Dorsolateral prefrontal cortex (tissue), 120 donors: ENCODE measurements at regions of chr3 and their contacts with region 1.

Region 1: DNA sequence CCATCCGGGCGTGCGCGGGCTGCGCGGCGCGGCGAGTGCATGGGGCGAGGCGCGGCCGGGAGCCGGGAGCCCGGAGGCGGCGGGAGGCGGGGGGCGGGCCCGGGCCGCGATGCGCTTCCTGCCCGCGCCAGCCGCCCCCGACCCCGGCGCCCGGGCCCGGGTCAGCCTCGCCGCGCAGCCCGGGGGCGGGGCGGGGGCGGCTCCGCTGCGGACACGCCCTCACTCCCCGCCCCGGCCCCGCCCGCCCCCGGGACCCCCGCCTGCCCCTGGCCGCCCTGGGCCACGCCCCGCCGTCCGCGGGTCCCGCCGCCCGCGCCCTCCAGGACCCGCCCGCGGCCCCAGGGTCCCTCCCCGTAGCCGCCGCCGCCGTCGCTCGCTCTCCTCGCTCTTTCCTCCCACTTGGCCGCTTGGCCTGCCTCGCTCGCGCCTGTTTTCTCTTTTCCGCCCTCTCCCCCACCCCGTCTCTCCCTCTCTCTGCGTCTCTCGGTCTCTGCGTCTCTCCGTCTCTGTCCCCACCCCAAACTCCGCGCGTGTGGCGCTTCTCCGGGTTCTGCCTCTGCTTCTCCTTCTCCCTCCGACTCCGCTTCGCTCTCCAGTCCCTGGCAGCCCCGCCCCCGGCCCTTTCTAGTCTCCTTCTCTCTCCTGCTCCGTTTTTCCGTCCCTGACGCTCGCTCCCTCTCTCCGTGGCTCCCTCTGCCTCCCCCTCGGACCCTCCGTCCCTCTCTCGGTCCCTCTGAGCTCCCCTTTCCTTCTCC is at the start of gene PLXND1:
- DNase-seq: peak in 4 of 10 donors; percentile 50 to 74 (median 62)
- H3K4me3 ChIP-seq: peak within 1 kb of the TSS; percentile 52 to 85 (median 75)
- H3K27ac ChIP-seq: peak within 1 kb of the TSS; percentile 58 to 98 (median 91)
- H3K27me3 ChIP-seq: no peaks in the 10 kb centered on the region
- CTCF ChIP-seq: no peak
- total RNA-seq, gene PLXND1: 60.7 to 184 (median 106) TPM

Region 2: DNA sequence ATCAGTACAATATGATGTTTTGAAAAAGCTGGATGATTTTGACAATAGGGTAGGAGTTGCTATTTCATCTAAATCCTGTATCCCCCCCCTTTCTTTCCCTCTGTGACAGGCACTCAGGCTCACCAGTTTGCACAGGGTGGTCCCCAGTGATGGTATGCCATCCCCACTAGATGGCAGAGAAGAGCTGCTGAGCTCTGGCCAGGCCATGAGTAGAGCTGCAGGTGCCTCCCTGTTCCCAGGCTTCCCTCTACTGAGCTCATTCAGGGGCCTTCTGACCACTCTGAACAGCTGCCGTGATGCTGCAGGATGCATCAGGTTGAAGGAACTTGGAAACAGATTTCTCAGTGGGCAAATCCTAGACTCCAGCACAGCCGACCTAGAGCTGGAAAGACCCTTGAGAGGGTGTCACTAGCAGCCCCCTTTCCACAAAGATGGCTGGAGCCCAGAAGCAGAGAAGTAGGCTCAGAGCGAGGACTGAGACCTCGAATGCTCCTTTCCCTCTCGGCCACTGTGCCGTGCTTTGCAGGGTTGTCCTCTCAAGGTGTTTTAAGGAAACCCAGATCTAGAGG is 223.4 kb before region 1 on chr3:
- intact Hi-C with region 1: loop called in 1 of 2 experiments (anchors 10 kb)
- DNase-seq: peak; percentile 26 to 78 (median 68)
- H3K4me3 ChIP-seq: no peak overlapping the region
- H3K27ac ChIP-seq: peak overlapping the region in 52 of 59 donors; percentile 0 to 91 (median 59)
- H3K27me3 ChIP-seq: no peaks in the 10 kb centered on the region
- CTCF ChIP-seq: peak in 55 of 56 donors; percentile 35 to 83 (median 74)

Region 3: DNA sequence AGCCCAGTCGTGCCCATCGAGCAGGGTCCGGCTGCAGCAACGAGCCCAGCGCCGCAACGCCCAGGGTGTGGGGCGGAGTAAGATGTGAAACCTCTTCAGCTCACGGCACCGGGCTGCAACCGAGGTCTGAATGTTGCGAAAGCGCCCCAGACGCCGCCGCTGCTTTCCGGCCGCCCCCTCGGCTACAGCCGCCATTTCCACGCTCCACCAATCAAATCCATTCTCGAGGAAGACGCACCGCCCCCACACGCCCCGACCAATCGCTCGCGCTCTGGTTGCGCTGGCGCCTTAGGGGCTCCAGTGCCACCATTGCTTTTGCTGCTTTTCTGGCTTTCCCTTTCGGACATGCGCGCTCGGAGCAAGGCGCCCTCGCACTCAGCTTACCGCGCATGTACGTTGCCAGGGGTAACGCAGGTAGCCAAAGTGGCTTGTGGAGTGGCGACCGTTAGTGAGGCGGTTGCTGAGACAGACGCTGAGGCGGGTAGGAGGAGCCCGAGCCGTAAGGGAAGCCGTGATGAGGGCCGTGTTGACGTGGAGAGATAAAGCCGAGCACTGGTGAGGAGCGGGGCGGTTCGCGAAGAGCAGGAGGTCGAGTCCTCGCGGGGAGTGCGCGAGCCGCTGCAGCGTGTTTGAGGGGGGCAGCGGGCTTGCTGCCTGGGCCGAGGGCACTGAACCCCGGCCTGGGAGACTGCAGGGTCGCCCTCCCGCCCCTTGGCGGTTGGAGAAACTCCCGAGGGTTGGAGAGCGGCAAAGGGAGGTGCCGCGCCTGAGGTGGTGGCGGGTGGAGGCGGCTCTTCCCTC is 166.8 kb before region 1 on chr3 and contains the starts of genes IFT122 and MBD4:
- intact Hi-C with region 1: loop called in 1 of 2 experiments (anchors 5 kb)
- DNase-seq: peak; percentile 92 to 98 (median 95)
- H3K4me3 ChIP-seq: peak within 1 kb of the TSS; percentile 68 to 99 (median 92)
- H3K27ac ChIP-seq: peak within 1 kb of the TSS; percentile 30 to 94 (median 85)
- H3K27me3 ChIP-seq: no peaks in the 10 kb centered on the region
- CTCF ChIP-seq: peak in 23 of 56 donors; percentile 3 to 47 (median 25)
- total RNA-seq, gene IFT122: 38.5 to 96.5 (median 58.5) TPM
- total RNA-seq, gene MBD4: 23.7 to 45.4 (median 31.5) TPM

Region 4: DNA sequence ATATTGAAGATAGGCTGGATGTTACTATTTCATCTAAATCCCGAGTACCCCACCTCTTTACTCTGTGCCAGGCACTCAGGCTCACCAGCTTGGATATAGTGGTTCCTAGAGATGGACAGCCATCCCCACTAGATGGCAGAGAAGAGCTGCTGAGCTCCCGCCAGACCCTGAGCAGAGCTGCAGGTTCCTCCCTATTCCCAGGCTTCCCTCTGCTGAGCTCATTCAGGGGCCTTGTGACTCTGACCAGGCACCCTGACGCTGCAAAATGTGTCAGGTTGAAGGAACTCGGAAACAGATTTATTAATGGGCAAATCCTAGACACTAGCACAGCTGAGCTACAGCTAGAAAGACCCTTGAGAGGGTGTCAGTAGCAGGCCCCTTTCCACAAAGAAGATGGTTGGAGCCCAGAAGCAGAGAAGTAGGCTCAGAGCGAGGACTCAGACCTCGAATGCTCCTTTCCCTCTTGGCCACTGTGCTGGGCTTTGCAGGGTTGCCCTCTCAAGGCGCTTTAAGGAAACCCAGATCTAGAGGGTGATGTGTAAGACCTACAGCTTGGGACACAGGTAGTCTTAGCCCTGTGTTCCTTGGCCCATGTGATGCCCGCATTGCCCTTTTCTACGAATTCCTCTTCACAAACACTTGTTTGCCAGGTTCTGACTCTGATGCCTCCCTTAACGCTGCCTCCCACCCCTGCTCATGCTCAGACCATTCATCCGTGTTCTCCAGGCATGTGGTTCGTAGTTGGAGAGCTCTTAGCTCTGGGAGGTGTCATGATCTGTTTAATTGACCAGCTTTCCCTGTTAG is 116.4 kb before region 1 on chr3:
- intact Hi-C with region 1: loop called (anchors 5 kb)
- DNase-seq: peak; percentile 66 to 94 (median 88)
- H3K4me3 ChIP-seq: peak overlapping the region in 23 of 59 donors; percentile 1 to 38 (median 22)
- H3K27ac ChIP-seq: peak overlapping the region; percentile 23 to 97 (median 89)
- H3K27me3 ChIP-seq: no peaks in the 10 kb centered on the region
- CTCF ChIP-seq: peak; percentile 77 to 99 (median 94)

Region 5: GRCh38 chr3:129586746-129587430 is 19.9 kb before region 1 on chr3:
- intact Hi-C with region 1: no loop called
- DNase-seq: no peak
- H3K4me3 ChIP-seq: no peak overlapping the region
- H3K27ac ChIP-seq: peak overlapping the region in 9 of 59 donors; percentile 4 to 57 (median 26)
- H3K27me3 ChIP-seq: no peaks in the 10 kb centered on the region
- CTCF ChIP-seq: no peak

Region 6: DNA sequence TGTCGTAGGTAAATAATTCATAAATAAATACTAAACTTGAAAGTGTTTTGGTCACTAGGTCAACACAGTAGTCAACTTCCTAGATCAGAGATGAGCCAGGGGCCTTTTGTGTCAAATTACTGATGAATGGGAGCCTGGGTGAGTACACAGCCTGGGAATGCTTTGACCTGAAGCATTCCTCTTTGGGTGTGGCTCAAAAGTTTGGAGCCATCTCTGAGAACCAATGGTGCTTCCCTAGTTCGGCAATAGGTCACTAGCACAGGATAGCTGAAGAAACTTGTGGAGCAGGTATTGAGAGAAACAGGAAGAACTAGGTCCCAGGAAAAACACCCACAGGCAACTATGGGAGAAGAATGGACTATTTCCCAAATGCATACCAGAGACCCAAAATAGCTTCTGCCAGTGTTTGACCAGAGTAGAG is 56.2 kb after region 1 on chr3:
- intact Hi-C with region 1: no loop called
- DNase-seq: no peak
- H3K4me3 ChIP-seq: no peak overlapping the region
- H3K27ac ChIP-seq: peak overlapping the region in 27 of 59 donors; percentile 0 to 80 (median 32)
- H3K27me3 ChIP-seq: no peaks in the 10 kb centered on the region
- CTCF ChIP-seq: no peak